Panc1 (cell line): ENCODE measurements at regions of chr10 and their contacts with region 1.

Region 1: GRCh38 chr10:30630571-30630970 is 1.0 kb upstream of the LYZL2 start:
- DNase-seq: no peak
- ATAC-seq: no peak
- H3K4me3 ChIP-seq: no peak overlapping the region
- H3K27ac ChIP-seq: no peak overlapping the region
- H3K4me1 ChIP-seq: no peaks in the 10 kb centered on the region
- H3K27me3 ChIP-seq: no peaks in the 10 kb centered on the region
- CTCF ChIP-seq: no peak

Region 2: DNA sequence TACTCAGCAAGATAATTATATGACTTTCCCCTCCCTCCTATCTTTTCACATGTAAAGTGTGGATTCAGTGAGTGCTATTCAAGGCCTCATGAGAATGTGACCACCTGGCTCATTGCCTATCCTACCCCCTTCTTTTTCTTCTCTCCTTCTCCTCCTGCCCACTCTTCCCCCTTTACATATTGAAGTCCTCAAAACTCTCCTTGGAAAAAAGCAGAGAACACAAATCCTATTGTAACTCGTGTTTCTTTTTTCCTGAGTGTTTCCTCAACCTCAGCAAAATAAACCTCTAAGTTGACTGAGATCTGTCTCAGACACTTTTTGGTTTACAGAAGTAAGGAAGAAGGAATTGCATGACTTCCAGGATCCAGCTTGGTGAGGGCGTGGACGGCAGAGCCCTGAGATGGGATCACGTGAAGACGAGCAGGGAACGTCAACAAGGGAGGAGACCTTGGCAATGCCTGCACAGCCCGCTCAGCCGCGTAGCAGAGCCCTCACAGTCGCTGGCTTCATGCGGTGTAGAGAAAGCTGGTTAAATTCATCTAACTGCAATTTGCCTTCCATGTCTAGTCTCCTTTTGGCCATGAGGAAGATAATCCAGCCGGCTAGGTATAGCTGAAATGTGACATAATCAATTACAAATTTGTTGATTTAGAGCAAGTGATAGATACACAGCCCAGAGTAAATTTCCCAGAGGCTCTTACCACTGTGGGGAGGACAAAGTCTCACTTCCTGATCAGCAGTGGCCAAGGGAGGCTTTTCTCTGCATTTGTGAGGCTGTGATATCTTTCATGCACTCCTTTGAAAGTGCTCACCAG is 76.7 kb before region 1 on chr10:
- CTCF ChIA-PET with region 1: no interaction called
- POLR2A ChIA-PET with region 1: interaction called, 12 read pairs
- in situ Hi-C with region 1: no loop called
- intact Hi-C with region 1: no loop called
- DNase-seq: no peak
- ATAC-seq: peak; percentile 65; the same call in 1 of the 2 replicates
- H3K4me3 ChIP-seq: peak overlapping the region in 1 of 2 experiments; percentile 18; a peak in 2 of 4 replicates
- H3K27ac ChIP-seq: peak overlapping the region; percentile 7; the same call in 1 of the 2 replicates
- H3K4me1 ChIP-seq: no peaks in the 10 kb centered on the region
- H3K27me3 ChIP-seq: no peaks in the 10 kb centered on the region
- CTCF ChIP-seq: no peak

Region 3: GRCh38 chr10:30751678-30752331 is 121.2 kb after region 1 on chr10:
- CTCF ChIA-PET with region 1: no interaction called
- POLR2A ChIA-PET with region 1: no interaction called
- in situ Hi-C with region 1: no loop called
- intact Hi-C with region 1: no loop called
- DNase-seq: no peak
- ATAC-seq: no peak
- H3K4me3 ChIP-seq: no peak overlapping the region
- H3K27ac ChIP-seq: no peak overlapping the region
- H3K4me1 ChIP-seq: no peaks in the 10 kb centered on the region
- H3K27me3 ChIP-seq: no peaks in the 10 kb centered on the region
- CTCF ChIP-seq: peak; percentile 41; the same call in 1 of the 2 replicates

Region 4: GRCh38 chr10:31139497-31139896 is 508.9 kb after region 1 on chr10:
- CTCF ChIA-PET with region 1: no interaction called
- POLR2A ChIA-PET with region 1: interaction called, 11 read pairs
- in situ Hi-C with region 1: no loop called
- intact Hi-C with region 1: no loop called
- DNase-seq: no peak
- ATAC-seq: no peak
- H3K4me3 ChIP-seq: no peak overlapping the region
- H3K27ac ChIP-seq: no peak overlapping the region
- H3K4me1 ChIP-seq: peaks cover 3% of the 10 kb centered on the region; the same call in 1 of the 2 replicates
- H3K27me3 ChIP-seq: no peaks in the 10 kb centered on the region
- CTCF ChIP-seq: no peak